SK-N-SH (cell line): ENCODE measurements at regions of chr6 and their contacts with region 1.

Region 1: DNA sequence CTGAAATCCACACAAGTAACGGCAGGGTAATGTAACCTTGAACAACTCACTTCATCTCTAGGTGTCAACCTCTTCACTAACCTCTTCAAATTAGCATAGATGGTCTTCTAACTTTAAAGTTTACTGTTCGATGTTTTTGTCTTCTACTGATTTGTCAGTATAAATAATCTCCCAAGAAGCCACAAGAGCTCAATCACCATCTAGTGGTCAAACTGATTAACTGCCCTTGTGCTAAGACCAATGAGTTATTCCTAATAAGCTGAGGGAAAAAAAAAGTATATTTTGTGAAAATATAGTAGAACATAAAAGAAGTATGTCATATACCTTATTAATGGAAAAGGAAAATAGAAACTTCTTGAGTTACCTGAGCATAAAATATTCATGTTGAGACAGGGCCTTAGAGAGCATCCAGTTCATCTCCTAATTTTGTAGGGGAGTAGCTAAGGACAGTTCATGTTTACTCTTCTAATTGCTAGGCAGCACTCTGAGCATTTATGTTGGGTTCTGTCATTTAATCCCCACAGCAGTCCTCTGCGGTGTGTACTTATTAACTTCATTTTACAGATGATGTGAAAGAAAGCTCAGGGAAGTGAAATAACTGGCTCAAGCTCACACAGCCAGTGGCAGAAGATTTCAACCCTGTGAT is 317.1 kb downstream of the ESR1 start:
- DNase-seq: peak; percentile 57
- H3K4me3 ChIP-seq: no peak overlapping the region
- H3K27ac ChIP-seq: no peak overlapping the region
- H3K4me1 ChIP-seq: peaks cover 0 to 2% of the 10 kb centered on the region in 2 experiments; a peak in 1 of 4 replicates
- H3K27me3 ChIP-seq: no peaks in the 10 kb centered on the region
- CTCF ChIP-seq: peak; percentile 85
- EP300 ChIP-seq: no peak
- RAD21 ChIP-seq: peak; percentile 80

Region 2: DNA sequence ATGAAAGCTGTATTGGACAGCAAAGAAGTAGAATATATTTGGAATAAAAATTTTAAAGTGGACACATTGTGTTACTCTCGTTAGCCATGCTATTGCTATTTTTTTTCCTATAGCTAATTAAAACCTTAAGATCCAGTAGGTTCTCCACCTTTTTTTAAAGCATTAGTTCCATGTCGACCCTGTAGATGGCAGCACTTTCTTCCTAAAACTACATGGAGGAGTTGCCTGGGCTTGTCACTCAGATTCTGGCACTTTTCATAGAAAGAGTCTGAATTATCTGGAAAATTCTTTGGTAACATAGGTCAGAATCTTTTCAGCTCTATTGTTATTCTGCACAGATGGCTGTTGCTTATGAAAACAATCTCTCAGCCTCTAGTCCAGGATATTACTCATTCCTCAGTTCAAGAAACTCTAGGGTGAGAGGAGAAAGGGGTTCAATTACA is 359.1 kb before region 1 on chr6:
- CTCF ChIA-PET with region 1: interaction called, 69 read pairs
- POLR2A ChIA-PET with region 1: no interaction called
- DNase-seq: peak; percentile 61
- H3K4me3 ChIP-seq: peak overlapping the region in 1 of 2 experiments; percentile 14; a peak in 1 of 4 replicates
- H3K27ac ChIP-seq: no peak overlapping the region
- H3K4me1 ChIP-seq: no peaks in the 10 kb centered on the region; a peak in 2 of 4 replicates
- H3K27me3 ChIP-seq: no peaks in the 10 kb centered on the region
- CTCF ChIP-seq: peak; percentile 76
- EP300 ChIP-seq: no peak
- RAD21 ChIP-seq: peak; percentile 73

Region 3: GRCh38 chr6:151891524-151891923 is 233.0 kb before region 1 on chr6:
- CTCF ChIA-PET with region 1: no interaction called
- POLR2A ChIA-PET with region 1: no interaction called
- DNase-seq: no peak
- H3K4me3 ChIP-seq: no peak overlapping the region
- H3K27ac ChIP-seq: no peak overlapping the region
- H3K4me1 ChIP-seq: no peaks in the 10 kb centered on the region
- H3K27me3 ChIP-seq: no peaks in the 10 kb centered on the region
- CTCF ChIP-seq: no peak
- EP300 ChIP-seq: no peak
- RAD21 ChIP-seq: no peak

Region 4: DNA sequence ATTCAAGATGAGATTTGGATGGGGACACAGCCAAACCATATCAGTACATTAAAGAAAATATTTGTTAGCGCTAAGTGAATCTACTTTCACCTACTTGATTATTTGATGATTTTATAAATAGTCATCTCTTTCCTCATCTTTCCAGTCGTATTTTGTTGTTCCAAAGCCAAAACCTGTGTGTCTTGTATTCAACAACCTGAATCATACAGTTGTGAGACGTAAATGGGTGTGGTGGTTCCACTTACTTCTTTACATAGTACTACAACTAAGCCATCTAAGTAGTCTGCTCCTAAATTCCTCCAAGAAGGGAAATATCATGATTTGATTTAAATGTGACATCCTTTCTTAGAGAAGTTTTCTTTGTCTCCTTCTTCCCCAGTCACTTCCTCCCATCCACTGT is 184.2 kb before region 1 on chr6:
- CTCF ChIA-PET with region 1: no interaction called
- POLR2A ChIA-PET with region 1: no interaction called
- DNase-seq: no peak
- H3K4me3 ChIP-seq: no peak overlapping the region
- H3K27ac ChIP-seq: no peak overlapping the region
- H3K4me1 ChIP-seq: no peaks in the 10 kb centered on the region
- H3K27me3 ChIP-seq: no peaks in the 10 kb centered on the region
- CTCF ChIP-seq: no peak
- EP300 ChIP-seq: no peak
- RAD21 ChIP-seq: no peak

Region 5: DNA sequence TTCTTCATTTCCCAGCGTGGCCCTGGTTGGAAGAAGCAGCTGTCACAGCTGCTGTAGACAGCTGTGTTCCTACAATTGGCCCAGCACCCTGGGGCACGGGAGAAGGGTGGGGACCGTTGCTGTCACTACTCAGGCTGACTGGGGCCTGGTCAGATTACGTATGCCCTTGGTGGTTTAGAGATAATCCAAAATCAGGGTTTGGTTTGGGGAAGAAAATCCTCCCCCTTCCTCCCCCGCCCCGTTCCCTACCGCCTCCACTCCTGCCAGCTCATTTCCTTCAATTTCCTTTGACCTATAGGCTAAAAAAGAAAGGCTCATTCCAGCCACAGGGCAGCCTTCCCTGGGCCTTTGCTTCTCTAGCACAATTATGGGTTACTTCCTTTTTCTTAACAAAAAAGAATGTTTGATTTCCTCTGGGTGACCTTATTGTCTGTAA is 24.4 kb before region 1 on chr6:
- CTCF ChIA-PET with region 1: interaction called, 21 read pairs
- POLR2A ChIA-PET with region 1: interaction called, 3 read pairs
- DNase-seq: no peak
- H3K4me3 ChIP-seq: no peak overlapping the region
- H3K27ac ChIP-seq: no peak overlapping the region
- H3K4me1 ChIP-seq: peaks cover 7 to 13% of the 10 kb centered on the region in 2 experiments; a peak in 2 of 4 replicates
- H3K27me3 ChIP-seq: no peaks in the 10 kb centered on the region
- CTCF ChIP-seq: no peak
- EP300 ChIP-seq: no peak
- RAD21 ChIP-seq: no peak

Region 6: DNA sequence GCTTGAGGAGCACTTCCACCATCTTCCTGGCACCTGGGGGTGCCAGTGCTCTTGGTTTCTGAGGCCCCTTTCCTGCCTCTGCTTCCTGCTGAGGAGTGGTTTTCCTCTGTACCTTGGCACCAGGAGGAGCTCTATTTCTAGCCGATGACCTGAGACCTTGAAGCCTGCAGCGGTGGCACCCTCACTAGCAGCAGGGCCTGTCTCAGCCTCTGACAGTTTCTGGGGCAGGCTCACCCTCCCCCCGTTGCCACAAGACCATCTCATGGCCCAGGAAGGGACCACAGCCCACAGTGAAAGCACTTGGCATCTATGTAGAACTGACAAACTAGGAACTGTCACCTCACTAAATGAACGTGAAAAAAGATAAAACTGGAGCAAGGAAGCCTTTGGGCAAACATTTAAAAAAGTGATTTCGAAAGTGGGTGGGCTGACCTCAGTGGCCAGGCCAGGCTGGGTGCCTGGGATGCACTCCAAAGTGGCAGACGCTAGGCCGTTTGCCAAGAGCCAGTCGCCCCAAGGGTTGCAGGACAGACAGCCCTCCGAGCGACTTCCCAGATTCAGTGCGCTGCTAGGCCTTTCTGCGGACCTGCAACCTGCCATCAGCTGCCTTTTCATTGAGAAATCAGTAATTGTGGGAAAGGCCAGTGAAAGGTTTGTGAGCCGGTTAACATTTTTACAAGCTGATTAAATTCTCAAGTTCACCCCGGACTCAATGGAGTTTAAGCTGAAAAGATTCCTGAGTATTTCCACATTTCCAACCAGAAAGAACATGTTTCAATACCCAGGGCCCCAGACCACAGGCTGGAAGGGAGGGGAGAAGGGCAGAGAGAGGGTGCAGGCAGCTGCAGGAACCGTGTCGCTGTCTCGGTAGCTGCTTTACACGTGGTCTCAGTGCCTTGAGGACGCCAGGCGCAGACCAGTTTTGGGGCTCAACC is 13.4 kb before region 1 on chr6:
- CTCF ChIA-PET with region 1: interaction called, 31 read pairs
- POLR2A ChIA-PET with region 1: no interaction called
- DNase-seq: peak; percentile 76
- H3K4me3 ChIP-seq: no peak overlapping the region; a peak in 1 of 4 replicates
- H3K27ac ChIP-seq: peak overlapping the region in 1 of 2 experiments; percentile 88; a peak in 2 of 4 replicates
- H3K4me1 ChIP-seq: peaks cover 0 to 19% of the 10 kb centered on the region in 2 experiments; a peak in 2 of 4 replicates
- H3K27me3 ChIP-seq: no peaks in the 10 kb centered on the region
- CTCF ChIP-seq: no peak
- EP300 ChIP-seq: peak in 1 of 2 experiments; percentile 58; a peak in 2 of 4 replicates
- RAD21 ChIP-seq: no peak

Region 7: DNA sequence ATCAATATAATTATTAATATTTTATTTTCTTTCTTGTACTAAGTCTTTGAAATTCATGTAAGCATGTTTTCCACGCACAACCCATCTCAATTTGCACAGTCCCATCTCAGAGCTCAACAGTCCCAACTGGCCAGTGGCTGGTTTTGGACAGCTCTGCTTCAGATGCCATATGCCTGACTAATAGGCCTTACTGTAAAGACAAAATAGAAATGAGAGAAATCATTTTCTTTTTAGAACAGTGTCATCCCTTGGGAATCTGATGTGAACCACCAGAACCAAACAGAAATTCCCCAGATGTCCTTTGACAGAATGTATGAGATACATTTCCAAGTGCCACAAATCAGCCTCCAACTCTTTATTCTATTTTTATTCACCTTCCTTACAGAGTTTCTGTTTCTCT is 21.8 kb after region 1 on chr6:
- CTCF ChIA-PET with region 1: interaction called, 10 read pairs
- POLR2A ChIA-PET with region 1: no interaction called
- DNase-seq: no peak
- H3K4me3 ChIP-seq: no peak overlapping the region
- H3K27ac ChIP-seq: peak overlapping the region in 1 of 2 experiments; percentile 68; a peak in 3 of 4 replicates
- H3K4me1 ChIP-seq: peaks cover 0 to 4% of the 10 kb centered on the region in 2 experiments; a peak in 1 of 4 replicates
- H3K27me3 ChIP-seq: no peaks in the 10 kb centered on the region
- CTCF ChIP-seq: no peak
- EP300 ChIP-seq: peak; percentile 26 to 58; a peak in 2 of 4 replicates
- RAD21 ChIP-seq: no peak

Region 8: GRCh38 chr6:152441902-152442301 is 317.4 kb after region 1 on chr6:
- CTCF ChIA-PET with region 1: no interaction called
- POLR2A ChIA-PET with region 1: no interaction called
- DNase-seq: peak; percentile 29
- H3K4me3 ChIP-seq: no peak overlapping the region
- H3K27ac ChIP-seq: no peak overlapping the region
- H3K4me1 ChIP-seq: no peaks in the 10 kb centered on the region; a peak in 1 of 4 replicates
- H3K27me3 ChIP-seq: no peaks in the 10 kb centered on the region
- CTCF ChIP-seq: no peak
- EP300 ChIP-seq: no peak
- RAD21 ChIP-seq: no peak